ENCODE measurements at regions of chr3 and their contacts with region 1.

Region 1: DNA sequence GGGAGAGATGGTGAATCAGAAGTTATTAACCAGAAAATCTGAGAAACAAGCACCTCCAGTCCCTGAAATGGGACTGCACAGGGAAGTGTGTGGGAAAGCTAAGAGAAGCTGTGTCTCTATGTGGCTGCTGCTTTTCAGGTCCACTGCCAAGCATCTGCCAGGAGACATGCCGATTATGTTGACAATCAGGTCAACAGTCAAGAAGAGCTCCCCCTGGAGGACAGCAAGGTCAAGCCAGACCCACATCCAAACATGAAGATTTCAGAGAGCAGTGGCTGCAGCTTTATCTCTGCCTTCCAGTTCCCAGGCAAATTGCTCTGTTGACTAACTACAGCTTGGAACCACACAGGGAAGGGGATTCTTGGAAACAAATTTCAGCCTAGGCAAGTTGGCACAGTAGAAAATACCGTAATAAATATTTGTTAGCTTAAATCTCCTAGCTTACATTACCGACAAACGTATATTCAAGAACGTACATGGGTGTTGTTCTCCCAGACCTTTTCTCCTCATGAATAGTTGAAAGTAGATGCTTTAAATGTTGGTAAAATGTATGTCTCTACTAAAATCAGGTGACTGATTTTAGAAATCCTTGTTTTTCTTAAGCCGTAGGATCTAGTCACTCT is 394.5 kb upstream of the RARB start:
- DNase-seq: peak in 1 of 2 donors; percentile 33
- ATAC-seq: peak; percentile 26 to 55
- H3K4me3 ChIP-seq: no peak overlapping the region
- H3K27ac ChIP-seq: no peak overlapping the region
- H3K4me1 ChIP-seq: peaks cover 8 to 14% of the 10 kb centered on the region in 2 donors
- H3K27me3 ChIP-seq: no peaks in the 10 kb centered on the region
- CTCF ChIP-seq: peak in 4 of 5 experiments; percentile 35 to 59 (median 52)
- POLR2A ChIP-seq: no peak

Region 2: GRCh38 chr3:24773798-24774197 is 259.7 kb before region 1 on chr3:
- in situ Hi-C with region 1: no loop called
- intact Hi-C with region 1: loop called (anchors 5 kb)
- DNase-seq: no peak
- ATAC-seq: peak; percentile 61 to 62
- H3K4me3 ChIP-seq: no peak overlapping the region
- H3K27ac ChIP-seq: no peak overlapping the region
- H3K4me1 ChIP-seq: no peaks in the 10 kb centered on the region
- H3K27me3 ChIP-seq: no peaks in the 10 kb centered on the region
- CTCF ChIP-seq: peak; percentile 37 to 72 (median 66)
- POLR2A ChIP-seq: no peak

Region 3: DNA sequence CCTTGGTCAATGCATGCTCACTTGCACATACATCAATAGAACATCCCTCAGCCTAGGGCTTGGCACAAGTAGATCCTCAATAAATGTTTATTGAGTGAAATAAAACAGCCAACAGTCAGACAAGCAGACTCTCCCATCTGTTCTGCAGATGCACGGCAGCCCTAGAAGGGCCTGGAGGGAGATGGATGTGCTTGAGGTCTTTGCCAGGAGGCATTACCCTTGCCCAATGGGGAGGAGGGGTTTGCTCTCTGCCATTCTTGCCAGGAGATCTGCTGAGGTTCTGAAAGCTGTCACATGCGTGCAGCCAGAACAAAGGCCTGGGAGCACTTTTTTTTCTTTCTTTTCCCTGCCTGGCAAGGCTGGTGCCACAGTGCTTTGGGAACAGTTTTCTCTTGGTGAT is 189.6 kb before region 1 on chr3:
- in situ Hi-C with region 1: no loop called
- intact Hi-C with region 1: no loop called
- DNase-seq: no peak
- ATAC-seq: no peak
- H3K4me3 ChIP-seq: no peak overlapping the region
- H3K27ac ChIP-seq: no peak overlapping the region
- H3K4me1 ChIP-seq: no peaks in the 10 kb centered on the region
- H3K27me3 ChIP-seq: no peaks in the 10 kb centered on the region
- CTCF ChIP-seq: no peak
- POLR2A ChIP-seq: no peak

Region 4: DNA sequence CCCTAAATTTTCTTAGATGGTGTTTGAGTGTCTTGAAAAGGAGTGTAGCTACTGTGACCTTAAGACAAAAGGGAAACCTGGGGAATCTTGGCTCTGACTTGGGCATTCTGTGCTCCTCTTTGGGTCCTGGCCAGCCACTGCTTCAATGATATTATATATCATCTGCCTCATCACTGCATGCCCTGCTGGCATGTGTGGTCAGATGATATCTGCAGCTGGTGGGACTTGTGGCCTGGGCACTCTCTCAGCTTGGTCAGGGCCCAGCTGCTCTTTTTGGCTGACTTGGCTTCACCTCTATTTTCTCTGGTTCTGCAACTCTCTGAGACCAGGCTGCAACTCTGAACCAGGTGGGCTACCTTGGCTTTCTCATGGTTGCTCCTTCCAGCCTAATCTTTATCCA is 51.6 kb before region 1 on chr3:
- in situ Hi-C with region 1: no loop called
- intact Hi-C with region 1: no loop called
- DNase-seq: peak; percentile 27 to 39
- ATAC-seq: peak; percentile 73 to 85
- H3K4me3 ChIP-seq: no peak overlapping the region
- H3K27ac ChIP-seq: no peak overlapping the region
- H3K4me1 ChIP-seq: peaks cover 5 to 6% of the 10 kb centered on the region in 2 donors
- H3K27me3 ChIP-seq: no peaks in the 10 kb centered on the region
- CTCF ChIP-seq: no peak
- POLR2A ChIP-seq: no peak

Region 5: DNA sequence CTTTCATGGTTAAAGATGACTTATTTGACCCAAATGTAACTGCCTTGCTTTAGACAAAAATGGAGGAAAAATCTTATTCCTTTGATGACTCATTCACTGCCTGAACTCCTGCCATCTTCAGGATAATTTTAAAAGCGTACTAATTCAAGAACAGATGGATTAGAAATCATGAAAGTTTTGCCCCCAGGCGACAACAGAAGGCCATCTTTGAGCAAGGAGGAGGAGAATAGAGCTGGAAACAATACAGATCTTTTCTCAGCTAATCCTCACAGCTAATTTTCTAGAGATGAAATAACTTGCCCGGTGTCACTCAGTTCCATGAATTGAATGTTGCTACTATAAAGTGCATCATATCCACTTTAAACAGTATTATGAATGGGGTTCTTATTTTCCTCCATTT is 69.9 kb after region 1 on chr3:
- in situ Hi-C with region 1: no loop called
- intact Hi-C with region 1: no loop called
- DNase-seq: no peak
- ATAC-seq: no peak
- H3K4me3 ChIP-seq: no peak overlapping the region
- H3K27ac ChIP-seq: no peak overlapping the region
- H3K4me1 ChIP-seq: peaks cover 0 to 5% of the 10 kb centered on the region in 2 donors
- H3K27me3 ChIP-seq: no peaks in the 10 kb centered on the region
- CTCF ChIP-seq: no peak
- POLR2A ChIP-seq: no peak